Activated naive CD4-positive, alpha-beta T cell treated with anti-CD3 and anti-CD28 coated beads for 36 hours (primary cell): ENCODE measurements at regions of chr2 and their contacts with region 1.

Region 1: DNA sequence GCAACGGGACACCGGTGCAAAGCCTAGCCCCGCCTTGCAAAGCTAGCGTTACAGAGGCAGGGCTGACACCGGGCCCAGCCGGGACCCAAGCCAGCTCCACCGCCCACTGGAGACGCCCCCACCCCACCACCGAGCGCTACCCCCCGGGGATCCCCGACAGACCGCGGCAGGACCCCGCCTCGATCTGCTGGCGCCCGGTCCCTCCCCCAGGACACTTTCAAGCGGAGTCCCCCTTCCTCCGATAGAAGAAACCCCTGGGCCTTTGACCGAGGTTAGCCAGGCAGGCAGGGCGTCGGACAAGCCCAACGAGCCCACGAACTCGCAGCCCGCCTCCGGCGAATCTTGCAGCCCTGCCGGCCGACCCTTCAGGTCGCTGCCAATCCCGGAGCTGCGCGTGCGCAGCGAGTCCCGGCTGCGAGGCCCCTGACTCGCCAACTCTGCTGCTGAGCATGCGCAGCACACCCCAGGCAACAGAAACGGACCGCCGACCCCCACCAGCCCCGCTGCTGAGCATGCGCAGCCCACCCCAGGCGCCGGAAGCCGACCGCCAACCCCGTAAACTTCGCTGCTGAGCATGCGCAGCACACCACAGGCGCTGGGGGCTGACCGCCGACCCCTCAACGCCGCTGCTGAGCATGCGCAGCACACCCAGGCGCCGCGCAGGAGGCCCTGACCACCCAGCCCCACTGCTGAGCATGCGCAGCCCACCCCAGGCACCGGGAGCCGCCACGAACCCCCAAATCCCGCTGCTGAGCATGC is 656 bp downstream of the ADI1 start:
- DNase-seq: peak; percentile 96
- H3K4me3 Mint-ChIP-seq: peak overlapping the region; percentile 84
- H3K27ac Mint-ChIP-seq: peak overlapping the region; percentile 85
- H3K4me1 Mint-ChIP-seq: peaks cover 27% of the 10 kb centered on the region
- H3K27me3 Mint-ChIP-seq: no peaks in the 10 kb centered on the region

Region 2: DNA sequence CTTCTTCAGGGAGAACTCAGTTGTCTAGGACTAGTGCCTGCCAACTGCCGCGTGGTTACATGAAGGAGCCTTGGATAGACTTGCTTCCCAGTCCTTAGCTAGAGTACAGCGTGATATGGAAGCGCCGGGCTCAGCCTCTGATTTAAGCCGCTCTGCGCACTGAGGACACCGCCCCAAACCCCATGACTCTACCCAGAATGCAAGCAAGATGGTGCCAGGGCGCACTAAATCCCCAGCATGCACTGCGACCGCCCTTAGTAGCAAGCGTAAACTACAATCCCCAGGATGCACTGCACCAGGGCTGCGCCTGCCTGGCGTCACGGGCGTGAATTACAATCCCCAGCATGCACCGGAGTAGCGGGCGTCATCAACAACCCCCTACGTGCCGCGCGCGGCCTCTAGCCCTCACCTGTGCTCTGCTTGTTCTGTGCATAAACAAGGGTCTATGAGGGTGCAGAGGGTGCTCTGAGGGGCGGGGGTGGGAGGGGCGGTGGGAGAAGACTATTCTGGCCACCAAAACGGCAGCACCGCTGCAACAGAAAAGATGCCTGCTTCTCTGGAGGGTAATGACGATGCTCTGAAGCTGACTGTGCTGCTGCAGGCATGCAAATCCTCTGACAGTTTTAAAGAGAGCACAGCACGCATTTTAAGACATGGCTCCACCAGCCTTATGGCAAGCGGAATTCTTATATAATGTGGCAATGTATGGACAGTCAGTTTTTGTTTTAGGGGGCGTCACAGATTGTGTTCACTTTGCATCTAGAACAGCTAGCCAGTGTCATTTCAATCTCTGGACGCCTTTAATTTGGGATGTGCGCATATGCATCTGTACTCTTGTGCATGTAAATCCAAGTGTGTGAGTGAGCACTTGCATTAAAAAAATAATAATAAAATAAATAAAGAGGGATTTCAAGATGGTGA is 905.1 kb before region 1 on chr2:
- CTCF ChIA-PET with region 1: no interaction called
- intact Hi-C with region 1: loop called (anchors 1 kb)
- DNase-seq: peak; percentile 96
- H3K4me3 Mint-ChIP-seq: peak overlapping the region; percentile 76
- H3K27ac Mint-ChIP-seq: peak overlapping the region; percentile 79
- H3K4me1 Mint-ChIP-seq: peaks cover 8% of the 10 kb centered on the region
- H3K27me3 Mint-ChIP-seq: no peaks in the 10 kb centered on the region

Region 3: DNA sequence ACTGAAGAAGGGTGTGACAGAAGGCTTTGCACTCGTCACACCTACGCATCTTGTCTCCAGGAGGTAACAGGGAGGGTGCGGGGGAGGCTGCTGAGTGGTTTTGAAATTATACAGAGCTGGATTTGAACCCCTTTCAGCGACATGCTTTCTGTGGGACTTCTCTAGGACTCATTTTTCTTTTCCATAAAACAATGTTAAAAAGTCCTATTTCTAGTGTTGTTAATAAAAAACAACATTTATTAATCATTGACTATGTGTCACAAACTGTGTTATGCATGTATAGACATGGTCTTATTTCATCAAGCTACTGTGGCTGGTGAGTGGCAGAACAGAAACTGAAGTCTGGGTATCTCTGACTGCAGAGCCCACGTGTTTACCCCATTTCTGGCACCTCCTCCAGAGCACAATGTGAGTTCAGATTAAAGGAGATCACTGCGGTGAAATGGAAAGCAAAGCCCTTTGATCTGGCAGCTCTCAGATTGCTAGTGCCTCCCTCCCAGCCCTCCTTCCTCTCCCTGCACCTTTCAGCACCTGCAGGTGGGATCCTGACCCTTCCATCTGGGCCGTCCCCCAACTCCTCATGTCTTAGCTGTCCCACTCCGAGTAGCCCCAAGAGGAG is 872.1 kb before region 1 on chr2:
- CTCF ChIA-PET with region 1: no interaction called
- intact Hi-C with region 1: loop called (anchors 1 kb)
- DNase-seq: peak; percentile 75
- H3K4me3 Mint-ChIP-seq: peak overlapping the region; percentile 8
- H3K27ac Mint-ChIP-seq: peak overlapping the region; percentile 69
- H3K4me1 Mint-ChIP-seq: peaks cover 40% of the 10 kb centered on the region
- H3K27me3 Mint-ChIP-seq: no peaks in the 10 kb centered on the region

Region 4: DNA sequence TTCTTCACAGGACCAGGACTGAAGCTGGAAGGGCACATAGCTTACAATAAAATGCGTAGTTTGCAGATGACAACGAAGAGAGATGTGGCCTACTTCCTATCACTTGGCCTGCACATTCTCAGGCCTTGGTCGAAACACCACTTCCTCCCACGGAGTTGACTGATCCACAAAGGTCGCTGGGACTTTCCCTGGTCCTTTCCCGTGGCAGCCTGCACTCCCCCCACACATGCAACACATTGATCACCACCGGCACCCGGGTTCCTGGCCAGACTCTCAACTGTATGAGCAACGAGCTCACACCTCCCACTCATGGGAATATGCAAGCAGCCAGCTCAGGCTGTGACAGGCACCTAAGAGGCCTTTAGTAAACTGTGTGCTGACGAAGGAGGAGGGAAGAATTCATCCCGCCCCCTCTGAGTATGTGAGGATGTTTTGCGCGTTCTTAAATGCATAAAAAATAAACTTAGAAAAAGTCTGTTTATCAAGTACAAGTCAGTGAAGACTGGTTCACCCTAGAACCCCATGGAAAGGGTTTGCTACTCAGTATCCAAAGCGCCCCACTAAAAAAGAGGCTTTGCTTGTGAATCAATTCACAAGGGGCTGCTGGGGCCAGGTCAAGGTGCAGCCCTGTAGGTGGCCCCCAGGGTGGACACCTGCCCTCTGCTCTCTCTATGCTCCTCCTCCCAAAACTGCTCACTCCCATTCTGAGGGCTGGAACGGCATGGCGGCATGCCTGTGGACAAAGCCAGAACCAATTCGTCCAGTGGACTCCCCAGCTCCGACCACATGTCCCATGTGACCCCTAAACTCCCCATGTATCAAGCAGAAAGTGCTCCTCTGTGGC is 295.4 kb before region 1 on chr2:
- CTCF ChIA-PET with region 1: no interaction called
- intact Hi-C with region 1: loop called (anchors 2 kb)
- DNase-seq: peak; percentile 97
- H3K4me3 Mint-ChIP-seq: peak overlapping the region; percentile 35
- H3K27ac Mint-ChIP-seq: peak overlapping the region; percentile 100
- H3K4me1 Mint-ChIP-seq: peaks cover 44% of the 10 kb centered on the region
- H3K27me3 Mint-ChIP-seq: no peaks in the 10 kb centered on the region

Region 5: DNA sequence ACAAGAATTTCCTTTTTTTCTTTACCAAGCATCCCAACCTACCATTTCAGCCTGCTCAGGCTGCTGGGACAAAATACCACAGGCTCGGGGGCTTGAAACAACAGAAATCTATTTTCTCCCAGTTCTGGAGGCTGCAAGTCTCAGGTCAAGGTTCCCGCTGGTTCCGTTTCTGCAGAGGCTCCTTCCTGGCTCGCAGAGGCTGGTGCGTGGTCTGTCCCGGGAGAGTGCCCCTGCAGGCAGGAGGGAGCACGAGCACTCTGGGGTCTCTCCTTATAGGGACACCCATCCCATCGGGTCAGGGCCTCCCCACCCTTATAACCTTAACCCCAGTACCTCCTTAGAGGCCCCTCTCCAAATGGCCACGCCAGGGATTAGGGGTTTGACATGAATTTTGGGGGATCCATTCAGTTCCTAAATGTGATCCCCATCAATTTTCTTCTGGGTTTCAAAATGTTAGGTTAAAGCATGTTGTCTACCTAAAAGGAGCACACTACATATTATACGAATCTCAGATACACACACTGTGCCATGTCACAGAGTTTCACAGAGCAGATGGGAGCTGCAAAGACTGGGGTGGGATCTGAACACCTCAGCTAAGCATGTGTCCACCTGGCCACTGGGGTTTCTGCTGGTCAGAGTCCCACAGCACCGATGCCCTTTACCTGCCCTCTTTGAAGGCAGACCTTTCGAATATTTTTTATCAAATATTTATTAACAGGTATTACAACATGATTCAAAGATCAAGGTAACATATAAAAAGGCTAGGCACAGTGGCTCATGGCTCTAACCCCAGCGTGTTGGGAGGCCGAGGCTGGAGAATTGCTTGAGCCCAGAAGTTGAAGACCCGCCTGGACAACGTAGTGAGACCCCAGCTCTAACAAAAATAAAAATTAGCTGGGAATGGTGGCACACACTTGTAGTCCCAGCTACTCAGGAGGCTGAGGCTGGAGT is 18.3 kb after region 1 on chr2:
- CTCF ChIA-PET with region 1: no interaction called
- intact Hi-C with region 1: loop called (anchors 1 kb)
- DNase-seq: no peak
- H3K4me3 Mint-ChIP-seq: peak overlapping the region; percentile 61
- H3K27ac Mint-ChIP-seq: peak overlapping the region; percentile 83
- H3K4me1 Mint-ChIP-seq: peaks cover 3% of the 10 kb centered on the region
- H3K27me3 Mint-ChIP-seq: no peaks in the 10 kb centered on the region

Region 6: GRCh38 chr2:3575534-3576262 is 57.0 kb after region 1 on chr2:
- CTCF ChIA-PET with region 1: no interaction called
- intact Hi-C with region 1: loop called (anchors 1 kb)
- DNase-seq: peak; percentile 27
- H3K4me3 Mint-ChIP-seq: peak overlapping the region; percentile 88
- H3K27ac Mint-ChIP-seq: peak overlapping the region; percentile 91
- H3K4me1 Mint-ChIP-seq: peaks cover 50% of the 10 kb centered on the region
- H3K27me3 Mint-ChIP-seq: no peaks in the 10 kb centered on the region

Region 7: GRCh38 chr2:3604991-3605961 is 86.6 kb after region 1 on chr2:
- CTCF ChIA-PET with region 1: no interaction called
- intact Hi-C with region 1: loop called (anchors 2 kb)
- DNase-seq: peak; percentile 77
- H3K4me3 Mint-ChIP-seq: peak overlapping the region; percentile 68
- H3K27ac Mint-ChIP-seq: peak overlapping the region; percentile 84
- H3K4me1 Mint-ChIP-seq: peaks cover 18% of the 10 kb centered on the region
- H3K27me3 Mint-ChIP-seq: no peaks in the 10 kb centered on the region